ENCODE measurements at regions of chr19 and their contacts with region 1.

Region 1: DNA sequence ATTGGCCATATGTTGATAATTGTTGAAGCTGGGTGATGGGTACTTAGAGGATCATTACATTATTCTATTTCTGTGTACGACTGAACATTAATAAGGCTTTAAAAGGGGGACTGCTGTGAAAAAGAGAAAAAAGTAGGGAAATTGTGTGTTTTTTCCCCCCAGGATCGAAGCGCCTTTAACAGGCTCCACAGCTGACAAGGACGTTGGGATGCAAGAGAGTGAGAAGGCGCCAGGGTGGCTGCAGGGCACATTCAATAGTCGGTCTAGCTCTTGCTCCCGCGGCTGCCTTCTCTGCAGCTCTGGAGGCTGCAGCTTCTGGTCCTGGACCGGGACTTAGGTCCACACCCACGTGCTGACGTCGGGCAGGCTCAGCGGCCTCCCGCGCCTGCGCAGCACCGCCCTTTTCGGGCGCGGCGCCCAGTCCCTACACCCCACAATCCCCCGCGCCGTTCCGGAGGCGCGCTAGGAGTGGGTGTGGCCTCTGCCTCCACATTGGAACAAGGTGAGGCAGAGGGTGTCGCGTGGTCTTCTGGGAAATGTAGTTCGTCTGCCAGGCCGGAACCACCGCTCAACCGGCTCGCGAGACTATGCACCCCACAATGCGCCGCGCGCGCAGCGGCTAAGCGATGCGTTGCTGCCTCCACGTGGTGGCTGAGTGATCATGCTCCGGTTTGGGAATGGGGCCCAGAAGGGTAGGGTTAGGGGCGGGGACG is 4.9 kb upstream of the LRFN3 start:
- DNase-seq: peak; percentile 97 to 100 (median 99)

Region 2: DNA sequence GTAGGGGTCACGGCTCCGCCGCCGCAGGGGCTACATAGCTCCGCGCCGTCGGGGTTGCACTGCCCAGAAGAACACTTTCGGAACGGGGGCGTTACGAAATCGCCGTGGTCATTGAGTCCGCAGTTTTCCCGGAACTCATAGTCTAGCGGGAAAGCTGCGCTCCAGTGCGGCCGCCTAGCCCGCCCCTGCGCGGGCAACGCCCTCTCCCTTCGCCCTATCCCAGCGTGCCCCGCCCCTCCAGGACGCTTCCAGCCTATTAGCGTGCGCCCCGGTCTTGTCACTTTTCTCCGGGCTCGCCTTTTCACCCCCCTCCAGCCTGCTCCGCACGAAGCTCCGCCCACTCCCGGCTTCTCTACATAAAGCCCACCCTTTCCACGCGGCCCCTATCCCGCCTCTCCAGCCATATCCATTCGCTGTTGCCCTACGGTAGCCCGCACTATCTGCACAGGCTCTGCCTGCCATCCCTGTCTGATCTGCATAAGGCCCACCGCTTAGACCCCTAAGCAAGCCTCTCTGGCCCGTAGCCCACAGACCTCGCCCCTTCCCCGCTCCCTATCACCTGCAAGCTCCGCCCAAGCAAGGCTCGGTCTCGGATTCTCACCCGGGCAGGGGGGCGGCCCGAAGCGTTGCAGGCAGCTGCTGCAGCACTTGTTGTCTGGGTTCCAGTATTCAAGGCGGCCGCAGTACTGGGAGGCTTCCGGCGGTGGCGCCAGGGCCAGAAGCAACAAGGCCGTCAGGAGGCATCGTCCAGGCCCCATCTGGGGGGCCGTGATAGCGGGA is 190.7 kb before region 1 on chr19:
- intact Hi-C with region 1: loop called (anchors 10 kb)
- DNase-seq: peak; percentile 97 to 100 (median 99)

Region 3: GRCh38 chr19:35882114-35882832 is 49.0 kb before region 1 on chr19:
- intact Hi-C with region 1: loop called (anchors 2 kb)
- DNase-seq: peak in 18 of 42 donors; percentile 29 to 84 (median 68)

Measured in head of caudate nucleus (tissue), 42 donors.